ENCODE measurements at regions of chr2 and their contacts with region 1.

Region 1: GRCh38 chr2:174577967-174578589 is 19.5 kb downstream of the WIPF1 start:
- DNase-seq: peak; percentile 71
- ATAC-seq: peak; percentile 71
- H3K4me3 Mint-ChIP-seq: no peak overlapping the region
- H3K27ac Mint-ChIP-seq: peak overlapping the region; percentile 49
- H3K4me1 Mint-ChIP-seq: peaks cover 75% of the 10 kb centered on the region
- H3K27me3 Mint-ChIP-seq: no peaks in the 10 kb centered on the region
- CTCF ChIP-seq: peak; percentile 63

Region 2: DNA sequence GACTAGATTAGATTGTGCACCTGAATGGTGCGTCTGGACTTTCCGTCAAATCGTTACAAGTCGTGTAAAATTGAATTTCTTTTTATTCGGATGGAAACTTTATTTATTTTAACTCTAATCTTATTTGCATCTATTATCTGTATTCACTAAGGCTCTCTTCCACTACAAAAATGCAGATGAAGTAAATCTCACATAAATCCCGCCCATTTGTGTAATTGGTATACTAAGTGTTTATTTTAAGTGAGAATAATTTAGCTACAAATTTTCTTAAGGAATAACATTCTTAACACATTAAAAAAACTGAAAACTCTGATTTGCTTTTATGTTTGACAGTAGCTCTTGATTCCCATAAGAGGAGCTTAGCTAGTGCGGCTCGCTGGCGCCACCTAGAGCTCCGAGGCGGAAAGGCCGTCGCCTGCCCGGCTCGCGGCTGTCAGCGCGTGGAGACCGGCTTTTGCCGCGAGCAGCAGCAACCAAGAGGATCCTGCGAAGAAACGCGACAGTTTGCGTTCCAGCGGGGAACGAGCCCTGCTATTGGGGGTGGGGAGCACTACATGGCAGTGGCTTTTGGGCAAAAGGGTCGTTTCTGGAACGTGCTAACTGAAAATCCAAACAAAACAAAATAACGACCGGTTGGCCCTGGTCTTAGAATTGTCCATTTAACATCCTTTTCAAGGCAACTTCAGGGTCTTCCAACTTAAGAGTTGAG is 236.6 kb before region 1 on chr2:
- CTCF ChIA-PET with region 1: no interaction called
- POLR2A ChIA-PET with region 1: no interaction called
- intact Hi-C with region 1: no loop called
- DNase-seq: peak; percentile 92
- ATAC-seq: peak; percentile 70
- H3K4me3 Mint-ChIP-seq: peak overlapping the region; percentile 60
- H3K27ac Mint-ChIP-seq: no peak overlapping the region
- H3K4me1 Mint-ChIP-seq: peaks cover 29% of the 10 kb centered on the region
- H3K27me3 Mint-ChIP-seq: peaks cover 63% of the 10 kb centered on the region
- CTCF ChIP-seq: peak; percentile 98

Region 3: DNA sequence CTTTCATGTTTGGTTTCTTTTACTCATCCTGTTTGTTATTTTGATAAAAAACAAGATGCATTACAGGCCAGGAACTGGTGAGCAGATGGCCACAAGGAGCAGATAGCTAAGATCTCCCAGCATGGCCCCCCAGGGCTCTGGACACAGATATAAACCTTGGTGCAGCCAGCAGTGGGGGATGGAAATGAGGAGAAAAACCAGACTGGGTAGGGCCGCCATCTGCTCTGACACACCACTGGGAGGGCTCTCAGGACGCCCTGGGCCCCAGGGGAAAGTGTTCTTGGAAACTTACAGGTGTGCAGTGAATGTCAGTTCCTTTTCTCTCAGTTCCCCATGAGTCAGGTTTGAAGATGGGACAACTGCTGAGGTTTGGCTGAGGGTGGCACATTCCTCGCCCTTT is 41.8 kb before region 1 on chr2:
- CTCF ChIA-PET with region 1: no interaction called
- POLR2A ChIA-PET with region 1: no interaction called
- intact Hi-C with region 1: no loop called
- DNase-seq: no peak
- ATAC-seq: no peak
- H3K4me3 Mint-ChIP-seq: no peak overlapping the region
- H3K27ac Mint-ChIP-seq: no peak overlapping the region
- H3K4me1 Mint-ChIP-seq: no peaks in the 10 kb centered on the region
- H3K27me3 Mint-ChIP-seq: no peaks in the 10 kb centered on the region
- CTCF ChIP-seq: no peak

Region 4: GRCh38 chr2:174593574-174594203 is 15.6 kb after region 1 on chr2:
- CTCF ChIA-PET with region 1: interaction called, 102 read pairs
- POLR2A ChIA-PET with region 1: interaction called, 139 read pairs
- intact Hi-C with region 1: no loop called
- DNase-seq: peak; percentile 88
- ATAC-seq: peak; percentile 71
- H3K4me3 Mint-ChIP-seq: peak overlapping the region; percentile 87
- H3K27ac Mint-ChIP-seq: peak overlapping the region; percentile 99
- H3K4me1 Mint-ChIP-seq: peaks cover 40% of the 10 kb centered on the region
- H3K27me3 Mint-ChIP-seq: no peaks in the 10 kb centered on the region
- CTCF ChIP-seq: no peak

Region 5: GRCh38 chr2:174603280-174603679 is 25.2 kb after region 1 on chr2:
- CTCF ChIA-PET with region 1: interaction called, 102 read pairs
- POLR2A ChIA-PET with region 1: interaction called, 139 read pairs
- intact Hi-C with region 1: loop called (anchors 1 kb)
- DNase-seq: peak; percentile 79
- ATAC-seq: peak; percentile 61
- H3K4me3 Mint-ChIP-seq: no peak overlapping the region
- H3K27ac Mint-ChIP-seq: peak overlapping the region; percentile 77
- H3K4me1 Mint-ChIP-seq: peaks cover 91% of the 10 kb centered on the region
- H3K27me3 Mint-ChIP-seq: no peaks in the 10 kb centered on the region
- CTCF ChIP-seq: peak; percentile 76

Region 6: DNA sequence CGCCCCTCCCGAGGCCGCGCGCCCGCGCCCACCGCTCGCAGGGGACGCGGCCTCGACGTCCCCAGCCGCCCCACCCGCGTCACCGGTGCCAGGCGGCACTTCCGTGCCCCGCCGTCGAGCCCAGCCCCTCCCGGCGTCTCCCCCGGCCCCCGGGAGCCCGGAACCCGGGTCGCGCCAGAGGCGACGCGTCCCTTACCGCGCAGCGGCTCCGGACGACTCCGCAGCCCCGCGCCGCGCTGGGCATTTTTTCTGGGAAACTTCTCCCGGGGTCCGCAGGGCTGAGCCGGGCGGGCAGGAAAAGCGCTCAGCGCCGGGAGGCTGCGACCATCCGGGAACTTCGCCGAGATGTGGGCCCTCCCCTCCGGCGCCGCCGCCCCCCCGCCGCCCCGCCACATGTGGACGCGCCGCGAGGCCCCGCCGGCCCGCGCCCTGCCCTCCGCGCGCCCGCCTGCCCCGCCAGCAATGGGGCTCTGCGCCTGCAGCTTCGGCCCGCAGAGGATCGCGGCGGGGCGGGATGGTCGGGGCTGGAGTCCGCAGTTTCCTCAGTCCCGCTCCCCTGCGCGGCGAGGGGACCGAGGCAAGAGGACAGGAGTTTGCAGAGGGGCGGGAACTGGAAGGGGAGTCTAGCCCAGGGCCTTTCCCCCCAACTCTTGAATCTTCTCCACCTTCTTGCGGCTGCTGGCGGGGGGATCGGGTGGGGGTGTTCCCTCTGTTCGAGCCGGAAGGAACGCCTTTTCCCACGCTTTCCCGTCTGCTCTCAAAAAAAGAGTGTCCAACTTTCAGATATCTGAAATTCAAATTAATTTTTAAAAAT is 104.7 kb after region 1 on chr2:
- CTCF ChIA-PET with region 1: interaction called, 143 read pairs
- POLR2A ChIA-PET with region 1: interaction called, 5 read pairs
- intact Hi-C with region 1: no loop called
- DNase-seq: peak; percentile 57
- ATAC-seq: peak; percentile 70
- H3K4me3 Mint-ChIP-seq: peak overlapping the region; percentile 88
- H3K27ac Mint-ChIP-seq: peak overlapping the region; percentile 92
- H3K4me1 Mint-ChIP-seq: peaks cover 62% of the 10 kb centered on the region
- H3K27me3 Mint-ChIP-seq: no peaks in the 10 kb centered on the region
- CTCF ChIP-seq: no peak

Region 7: DNA sequence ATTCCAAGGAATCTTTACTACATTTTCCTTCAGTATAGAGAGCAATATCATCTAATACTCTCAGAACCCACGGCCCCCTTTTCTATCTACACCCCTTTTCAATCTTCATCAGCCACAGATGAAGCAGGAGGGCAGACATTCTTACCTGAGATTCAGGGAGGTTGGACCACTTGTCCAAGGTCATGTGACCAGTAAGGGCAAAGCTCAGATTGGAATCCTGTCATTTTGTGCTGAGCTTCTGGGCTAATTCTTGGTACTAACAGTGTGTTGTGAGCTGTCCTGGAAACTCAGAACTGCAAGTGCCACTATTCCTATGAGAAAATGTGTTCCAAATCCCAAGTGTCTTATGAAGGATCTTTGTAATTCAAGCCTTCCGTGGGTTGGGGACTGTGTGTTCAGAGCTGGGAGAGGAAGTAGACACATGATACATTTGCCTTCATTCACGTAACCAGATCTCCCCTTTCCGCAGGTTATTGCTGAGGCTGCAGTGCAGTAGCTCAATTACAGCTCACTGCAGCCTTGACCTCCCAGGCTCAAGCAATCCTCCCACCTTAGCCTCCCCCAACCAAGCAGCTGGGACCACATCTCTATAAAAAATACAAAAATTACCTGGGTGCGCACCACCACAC is 182.9 kb after region 1 on chr2:
- CTCF ChIA-PET with region 1: no interaction called
- POLR2A ChIA-PET with region 1: no interaction called
- intact Hi-C with region 1: no loop called
- DNase-seq: no peak
- ATAC-seq: no peak
- H3K4me3 Mint-ChIP-seq: no peak overlapping the region
- H3K27ac Mint-ChIP-seq: no peak overlapping the region
- H3K4me1 Mint-ChIP-seq: peaks cover 9% of the 10 kb centered on the region
- H3K27me3 Mint-ChIP-seq: no peaks in the 10 kb centered on the region
- CTCF ChIP-seq: no peak